Mammary epithelial cell (primary cell): ENCODE measurements at regions of chr15 and their contacts with region 1.

Region 1: DNA sequence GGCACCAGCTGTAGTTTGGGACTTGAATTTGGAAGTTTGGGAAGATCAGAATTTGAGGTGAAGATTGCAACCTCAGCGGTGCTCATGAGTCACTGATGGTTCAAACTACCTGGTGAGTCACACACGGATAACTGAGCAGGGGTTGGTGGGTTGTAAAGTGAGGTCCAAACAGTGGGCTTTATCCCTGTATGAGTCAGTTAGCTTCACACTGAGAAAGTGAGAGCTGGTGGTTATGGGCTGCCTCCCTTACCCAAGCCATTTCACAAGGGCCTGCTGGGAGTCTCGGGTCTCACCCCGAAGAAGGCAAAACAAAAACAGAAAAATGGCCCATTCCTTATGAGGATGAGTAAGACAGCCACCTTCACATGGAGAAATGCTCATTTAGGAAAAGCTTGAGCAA is 77.0 kb downstream of the ITGA11 start:
- DNase-seq: peak; percentile 93
- H3K4me3 ChIP-seq: no peak overlapping the region
- H3K27ac ChIP-seq: no peak overlapping the region
- H3K4me1 ChIP-seq: peaks cover 27% of the 10 kb centered on the region
- H3K27me3 ChIP-seq: no peaks in the 10 kb centered on the region
- CTCF ChIP-seq: no peak

Region 2: GRCh38 chr15:68292157-68292781 is 62.7 kb before region 1 on chr15:
- CTCF ChIA-PET with region 1: no interaction called
- dilution Hi-C with region 1: loop called (anchors 5 kb)
- in situ Hi-C with region 1: no loop called
- intact Hi-C with region 1: no loop called
- DNase-seq: no peak
- H3K4me3 ChIP-seq: no peak overlapping the region
- H3K27ac ChIP-seq: no peak overlapping the region
- H3K4me1 ChIP-seq: peaks cover 23% of the 10 kb centered on the region
- H3K27me3 ChIP-seq: no peaks in the 10 kb centered on the region
- CTCF ChIP-seq: no peak